Naive thymus-derived CD4-positive, alpha-beta T cell (primary cell): ENCODE measurements at regions of chr12 and their contacts with region 1.

Region 1: GRCh38 chr12:105164068-105164467 is 56.5 kb downstream of the WASHC4 start:
- DNase-seq: no peak
- ATAC-seq: no peak
- H3K4me3 ChIP-seq: no peak overlapping the region
- H3K4me3 Mint-ChIP-seq: no peak overlapping the region
- H3K27ac ChIP-seq: peak overlapping the region; percentile 1
- H3K27ac Mint-ChIP-seq: peak overlapping the region in 3 of 9 donors; percentile 13 to 63 (median 51)
- H3K4me1 ChIP-seq: no peaks in the 10 kb centered on the region
- H3K4me1 Mint-ChIP-seq: peaks cover 0 to 12% (median 2%) of the 10 kb centered on the region in 7 donors
- H3K27me3 ChIP-seq: no peaks in the 10 kb centered on the region
- H3K27me3 Mint-ChIP-seq: no peaks in the 10 kb centered on the region

Region 2: DNA sequence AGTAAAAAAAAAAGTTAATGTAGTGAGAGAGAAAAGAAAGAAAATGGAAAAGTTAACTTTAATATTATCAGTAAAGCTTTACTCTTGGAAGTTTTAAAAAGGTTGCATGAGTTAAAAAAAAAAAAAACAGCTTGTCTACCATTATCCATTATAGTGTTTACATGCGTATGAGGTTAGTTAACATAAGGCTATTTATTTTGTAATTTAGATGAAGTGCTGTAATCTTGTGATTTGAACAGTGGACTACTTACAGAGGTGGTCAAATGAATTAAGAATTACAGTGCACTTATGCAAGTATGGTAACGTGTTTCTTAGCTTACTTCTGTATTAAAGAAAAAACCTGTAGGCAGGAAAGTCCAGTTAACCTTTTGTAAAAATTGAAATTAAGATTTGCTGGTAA is 25.8 kb before region 1 on chr12:
- CTCF ChIA-PET with region 1: no interaction called
- POLR2A ChIA-PET with region 1: no interaction called
- intact Hi-C with region 1: loop called in 1 of 2 experiments (anchors 5 kb)
- DNase-seq: no peak
- ATAC-seq: no peak
- H3K4me3 ChIP-seq: no peak overlapping the region
- H3K4me3 Mint-ChIP-seq: no peak overlapping the region
- H3K27ac ChIP-seq: no peak overlapping the region
- H3K27ac Mint-ChIP-seq: peak overlapping the region in 1 of 9 donors; percentile 37
- H3K4me1 ChIP-seq: no peaks in the 10 kb centered on the region
- H3K4me1 Mint-ChIP-seq: peaks cover 11 to 42% (median 31%) of the 10 kb centered on the region in 7 donors
- H3K27me3 ChIP-seq: no peaks in the 10 kb centered on the region
- H3K27me3 Mint-ChIP-seq: no peaks in the 10 kb centered on the region